Caco-2 (cell line): ENCODE measurements at regions of chr9 and their contacts with region 1.

Region 1: GRCh38 chr9:37559125-37559524 is 17.1 kb downstream of the FBXO10 start:
- DNase-seq: no peak
- H3K4me3 ChIP-seq: no peak overlapping the region
- H3K4me3 Mint-ChIP-seq: no peak overlapping the region
- H3K27ac Mint-ChIP-seq: no peak overlapping the region
- H3K4me1 ChIP-seq: no peaks in the 10 kb centered on the region
- H3K4me1 Mint-ChIP-seq: no peaks in the 10 kb centered on the region
- H3K27me3 ChIP-seq: no peaks in the 10 kb centered on the region
- H3K27me3 Mint-ChIP-seq: no peaks in the 10 kb centered on the region
- CTCF ChIP-seq: no peak

Region 2: GRCh38 chr9:37534412-37534811 is 24.7 kb before region 1 on chr9:
- CTCF ChIA-PET with region 1: no interaction called
- POLR2A ChIA-PET with region 1: no interaction called
- intact Hi-C with region 1: loop called (anchors 2 kb)
- DNase-seq: no peak
- H3K4me3 ChIP-seq: no peak overlapping the region
- H3K4me3 Mint-ChIP-seq: no peak overlapping the region
- H3K27ac Mint-ChIP-seq: no peak overlapping the region
- H3K4me1 ChIP-seq: no peaks in the 10 kb centered on the region
- H3K4me1 Mint-ChIP-seq: no peaks in the 10 kb centered on the region
- H3K27me3 ChIP-seq: no peaks in the 10 kb centered on the region
- H3K27me3 Mint-ChIP-seq: no peaks in the 10 kb centered on the region
- CTCF ChIP-seq: no peak

Region 3: GRCh38 chr9:37574241-37574721 is 15.2 kb after region 1 on chr9:
- CTCF ChIA-PET with region 1: no interaction called
- POLR2A ChIA-PET with region 1: no interaction called
- intact Hi-C with region 1: no loop called
- DNase-seq: no peak
- H3K4me3 ChIP-seq: no peak overlapping the region
- H3K4me3 Mint-ChIP-seq: no peak overlapping the region
- H3K27ac Mint-ChIP-seq: no peak overlapping the region
- H3K4me1 ChIP-seq: no peaks in the 10 kb centered on the region
- H3K4me1 Mint-ChIP-seq: no peaks in the 10 kb centered on the region
- H3K27me3 ChIP-seq: no peaks in the 10 kb centered on the region
- H3K27me3 Mint-ChIP-seq: no peaks in the 10 kb centered on the region
- CTCF ChIP-seq: no peak